Endothelial cell of umbilical vein (primary cell): ENCODE measurements at regions of chr10 and their contacts with region 1.

Region 1: DNA sequence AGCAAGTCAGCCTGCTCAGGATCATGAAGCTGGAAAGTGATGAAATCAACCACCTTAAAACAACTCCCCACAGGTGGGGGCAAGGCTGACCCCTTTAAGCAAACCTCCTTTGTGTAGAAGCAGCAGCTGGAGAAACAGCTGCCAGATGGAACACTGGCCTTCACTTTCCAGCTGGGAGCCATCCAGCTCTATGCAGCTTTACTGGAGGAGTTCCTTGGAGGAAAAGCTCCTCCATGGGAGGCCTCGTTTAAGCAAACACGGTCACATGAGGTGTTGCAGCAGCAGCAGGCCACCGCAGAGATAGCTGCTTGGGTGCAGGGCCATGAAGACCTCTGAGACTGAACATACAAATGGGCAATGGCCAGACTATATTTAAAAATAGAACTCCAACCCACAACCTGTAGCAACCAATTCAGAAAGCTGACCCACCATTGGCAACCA is 13.0 kb upstream of the DLG5 start:
- DNase-seq: no peak
- H3K4me3 ChIP-seq: no peak overlapping the region
- H3K27ac ChIP-seq: no peak overlapping the region
- H3K4me1 ChIP-seq: peaks cover 6% of the 10 kb centered on the region
- H3K27me3 ChIP-seq: peaks cover 0 to 2% of the 10 kb centered on the region in 2 experiments
- CTCF ChIP-seq: no peak
- POLR2A ChIP-seq: no peak

Region 2: DNA sequence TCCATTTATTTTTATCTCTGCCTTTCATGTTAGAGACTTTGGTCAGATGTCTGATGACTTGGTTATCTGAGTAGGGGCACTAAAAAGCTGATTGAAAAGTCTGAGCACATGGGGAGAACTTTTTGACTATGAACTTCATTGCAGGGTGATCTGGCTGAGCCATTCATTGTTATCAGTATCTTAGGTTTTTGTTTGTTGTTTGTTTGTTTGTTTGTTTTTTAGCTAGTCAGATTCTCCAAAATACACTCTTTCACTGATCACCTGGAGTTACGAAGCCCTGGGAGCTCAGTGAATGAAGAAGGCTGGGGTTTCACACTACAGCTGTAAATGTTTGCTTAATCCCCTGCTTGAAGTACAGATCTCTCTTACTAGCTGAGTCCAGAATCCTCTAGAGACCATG is 15.6 kb after region 1 on chr10:
- CTCF ChIA-PET with region 1: interaction called, 10 read pairs
- POLR2A ChIA-PET with region 1: no interaction called
- dilution Hi-C with region 1: no loop called
- intact Hi-C with region 1: no loop called
- DNase-seq: no peak
- H3K4me3 ChIP-seq: no peak overlapping the region
- H3K27ac ChIP-seq: no peak overlapping the region
- H3K4me1 ChIP-seq: no peaks in the 10 kb centered on the region
- H3K27me3 ChIP-seq: peaks cover 2% of the 10 kb centered on the region in 2 experiments
- CTCF ChIP-seq: no peak
- POLR2A ChIP-seq: no peak